ENCODE measurements at regions of chr9 and their contacts with region 1.

Region 1: GRCh38 chr9:96856363-96857286 is 2.3 kb upstream of the ZNF782 start:
- DNase-seq: peak; percentile 52
- ATAC-seq: peak; percentile 46

Region 2: GRCh38 chr9:97109194-97109811 is 252.7 kb after region 1 on chr9:
- intact Hi-C with region 1: loop called (anchors 5 kb)
- DNase-seq: peak; percentile 37
- ATAC-seq: peak; percentile 68

Region 3: DNA sequence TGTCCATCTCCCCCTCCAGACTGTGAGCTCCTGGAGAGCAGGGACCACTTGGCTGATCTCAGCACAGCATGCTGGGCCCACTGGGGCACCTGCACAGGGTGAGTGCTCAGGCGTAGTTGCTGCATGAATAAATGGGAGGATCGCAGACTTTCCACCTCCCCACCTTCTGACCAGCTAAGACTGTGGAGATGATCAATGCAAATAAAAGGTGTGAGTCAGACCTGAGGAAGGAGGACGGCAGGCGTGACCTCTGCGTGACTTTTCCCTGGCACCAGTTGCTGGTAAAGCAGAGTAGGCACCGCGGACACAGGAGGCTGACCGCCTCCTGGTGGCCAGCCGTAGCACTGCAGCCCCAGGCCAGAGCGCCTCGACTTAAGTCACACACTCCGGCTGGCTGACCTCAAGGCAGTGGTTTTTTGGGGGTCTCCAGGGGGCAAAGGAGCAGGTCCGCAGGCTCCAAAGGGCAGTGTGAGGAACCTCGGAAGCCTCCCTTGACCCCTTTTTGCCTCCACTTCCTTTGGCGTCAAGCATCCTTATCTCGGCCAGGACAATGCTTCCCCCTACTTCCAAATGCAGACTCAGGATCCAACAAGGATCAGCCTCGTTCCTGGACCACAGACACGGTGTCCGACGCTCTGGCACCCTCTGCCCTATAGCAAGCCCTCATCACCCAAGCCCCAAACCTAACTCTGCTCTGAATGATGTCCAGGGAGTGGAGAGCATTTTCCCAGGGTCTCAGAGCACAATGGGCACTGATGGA is 542.6 kb after region 1 on chr9:
- intact Hi-C with region 1: loop called (anchors 5 kb)
- DNase-seq: peak; percentile 82
- ATAC-seq: peak; percentile 90

Measured in left ventricle myocardium superior (tissue), 1 donor.